ENCODE measurements at regions of chr7 and their contacts with region 1.

Region 1: GRCh38 chr7:112322070-112322469 is 115.6 kb downstream of the ZNF277 start:
- DNase-seq: no peak

Region 2: DNA sequence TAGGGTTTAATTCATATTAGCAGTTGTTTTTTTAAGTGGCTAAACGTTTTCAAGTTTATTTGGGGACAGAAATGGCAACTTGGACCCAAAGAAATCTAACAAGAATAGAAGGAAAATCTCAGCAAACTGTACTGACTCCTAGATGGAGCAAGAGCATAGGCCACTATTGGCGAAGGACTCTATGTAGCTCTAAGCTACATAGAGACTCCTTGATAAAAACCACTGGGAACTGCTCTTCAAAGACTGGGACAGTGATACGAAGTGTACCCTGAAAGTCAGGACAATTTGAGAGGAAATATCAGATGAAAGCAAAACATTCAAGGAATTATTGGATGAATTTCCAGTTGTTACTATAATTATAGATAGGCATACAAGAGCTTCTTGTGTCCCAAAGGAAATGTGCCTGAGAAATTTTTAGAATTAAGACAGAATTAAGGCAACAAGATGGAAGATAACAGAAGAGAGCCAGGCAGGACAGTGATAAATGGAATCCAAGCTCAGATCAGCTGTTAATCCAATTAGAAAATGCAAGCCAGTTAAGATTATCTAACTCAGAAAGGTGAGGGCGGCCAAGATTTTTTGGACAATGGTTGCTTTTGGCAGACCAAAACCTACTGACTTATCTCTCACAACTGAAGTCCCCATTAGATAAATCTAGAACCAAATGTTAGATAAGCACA is 24.5 kb after region 1 on chr7:
- intact Hi-C with region 1: loop called in 1 of 2 experiments (anchors 1 kb)
- DNase-seq: no peak

Region 3: GRCh38 chr7:112550468-112551060 is 228.5 kb after region 1 on chr7:
- intact Hi-C with region 1: no loop called
- DNase-seq: no peak